ENCODE measurements at regions of chr9 and their contacts with region 1.

Region 1: DNA sequence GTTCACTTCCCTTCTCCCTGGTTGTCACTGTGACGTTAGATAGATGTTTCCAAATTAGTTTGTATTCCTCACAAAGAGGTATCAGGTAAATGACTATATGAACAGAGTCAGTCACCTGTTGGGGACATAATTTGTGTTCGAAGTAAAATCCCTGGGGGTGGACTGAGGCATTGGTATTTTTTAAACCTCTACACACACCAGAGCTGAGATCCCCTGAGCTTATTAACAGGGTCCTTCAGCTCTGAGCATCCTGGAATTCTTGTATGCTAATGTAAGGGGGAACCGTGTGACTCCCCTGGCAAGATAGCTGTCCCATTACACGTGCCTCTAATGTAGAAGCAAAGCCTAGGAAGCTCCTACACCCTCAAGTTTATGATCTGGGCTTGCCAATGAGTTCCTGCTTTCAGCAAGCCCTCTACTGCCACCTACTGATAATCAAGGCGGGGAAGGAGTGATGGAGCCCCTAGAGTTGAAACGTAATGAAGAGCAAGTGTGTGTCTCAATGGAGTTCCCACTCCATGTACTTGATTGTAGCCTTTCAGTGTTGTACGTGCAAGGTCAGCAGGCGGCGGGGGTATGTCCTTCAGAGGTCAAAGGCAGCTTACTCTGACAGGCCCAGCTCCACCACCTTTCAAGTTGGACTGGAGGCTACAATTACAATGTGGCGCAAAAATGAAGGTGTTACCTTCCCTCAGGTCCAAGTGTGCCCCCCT is 14.4 kb downstream of the PRKACG start:
- DNase-seq: peak; percentile 87
- H3K4me3 ChIP-seq: no peak overlapping the region
- H3K27ac ChIP-seq: no peak overlapping the region
- H3K4me1 ChIP-seq: peaks cover 13% of the 10 kb centered on the region
- CTCF ChIP-seq: peak; percentile 95

Region 2: GRCh38 chr9:68538200-68538599 is 461.3 kb before region 1 on chr9:
- CTCF ChIA-PET with region 1: no interaction called
- POLR2A ChIA-PET with region 1: no interaction called
- intact Hi-C with region 1: no loop called
- DNase-seq: no peak
- H3K4me3 ChIP-seq: no peak overlapping the region
- H3K27ac ChIP-seq: no peak overlapping the region
- H3K4me1 ChIP-seq: no peaks in the 10 kb centered on the region
- CTCF ChIP-seq: no peak

Region 3: GRCh38 chr9:68685770-68686169 is 313.8 kb before region 1 on chr9:
- CTCF ChIA-PET with region 1: no interaction called
- POLR2A ChIA-PET with region 1: no interaction called
- intact Hi-C with region 1: loop called (anchors 2 kb)
- DNase-seq: peak; percentile 85
- H3K4me3 ChIP-seq: no peak overlapping the region
- H3K27ac ChIP-seq: no peak overlapping the region
- H3K4me1 ChIP-seq: peaks cover 39% of the 10 kb centered on the region
- CTCF ChIP-seq: peak; percentile 91

Region 4: GRCh38 chr9:68779558-68780384 is 219.8 kb before region 1 on chr9:
- CTCF ChIA-PET with region 1: interaction called, 3 read pairs
- POLR2A ChIA-PET with region 1: no interaction called
- intact Hi-C with region 1: loop called (anchors 5 kb)
- DNase-seq: peak; percentile 96
- H3K4me3 ChIP-seq: peak overlapping the region; percentile 85
- H3K27ac ChIP-seq: peak overlapping the region; percentile 70
- H3K4me1 ChIP-seq: peaks cover 41% of the 10 kb centered on the region
- CTCF ChIP-seq: peak; percentile 78